ENCODE measurements at regions of chr2 and their contacts with region 1.

Region 1: DNA sequence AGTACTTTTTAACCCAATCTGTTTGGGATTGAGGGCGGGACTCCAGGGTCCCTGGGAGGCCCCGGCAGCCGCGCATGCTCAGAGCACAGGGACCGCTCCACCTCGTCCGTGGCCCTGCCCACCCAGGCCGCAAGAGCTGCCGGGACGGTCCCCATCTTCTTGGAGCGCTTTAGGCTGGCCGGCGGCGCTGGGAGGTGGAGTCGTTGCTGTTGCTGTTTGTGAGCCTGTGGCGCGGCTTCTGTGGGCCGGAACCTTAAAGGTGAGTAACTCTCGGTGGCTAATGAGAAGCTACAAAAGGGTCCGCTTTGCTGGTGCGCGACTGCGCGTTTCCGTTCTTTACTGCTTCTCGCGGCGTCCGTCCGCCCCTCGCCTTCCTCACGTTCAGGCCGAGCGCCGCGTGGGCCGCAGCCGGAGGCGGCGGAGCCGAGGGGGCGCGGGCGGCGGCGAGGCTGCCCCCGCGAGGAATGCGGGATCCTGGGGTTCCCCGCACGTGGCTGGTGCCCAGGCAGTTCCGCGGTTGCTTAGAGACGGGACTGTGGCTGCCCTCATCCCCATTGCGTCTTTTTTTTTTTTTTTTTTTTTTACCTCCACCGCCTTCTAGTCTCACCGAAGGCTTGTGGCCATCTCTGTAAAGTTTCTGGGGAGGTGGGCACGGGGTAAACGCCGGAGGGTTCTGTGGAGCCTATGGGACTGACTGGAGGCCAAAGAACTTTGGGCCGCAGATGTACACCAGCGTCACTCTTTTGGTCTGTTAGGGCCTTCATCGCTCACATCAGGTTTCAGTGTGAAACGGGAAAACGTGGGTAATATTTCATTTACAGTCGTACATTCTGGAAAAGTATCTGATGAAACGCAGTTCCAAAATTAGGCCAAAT is at the start of gene SSB:
- DNase-seq: peak; percentile 97
- H3K4me3 Mint-ChIP-seq: peak within 1 kb of the TSS; percentile 88
- H3K27ac Mint-ChIP-seq: peak within 1 kb of the TSS; percentile 95
- H3K4me1 Mint-ChIP-seq: peaks cover 29% of the 10 kb centered on the region
- H3K27me3 Mint-ChIP-seq: peaks cover 2% of the 10 kb centered on the region
- total RNA-seq, gene SSB: 122 to 129 TPM

Region 2: DNA sequence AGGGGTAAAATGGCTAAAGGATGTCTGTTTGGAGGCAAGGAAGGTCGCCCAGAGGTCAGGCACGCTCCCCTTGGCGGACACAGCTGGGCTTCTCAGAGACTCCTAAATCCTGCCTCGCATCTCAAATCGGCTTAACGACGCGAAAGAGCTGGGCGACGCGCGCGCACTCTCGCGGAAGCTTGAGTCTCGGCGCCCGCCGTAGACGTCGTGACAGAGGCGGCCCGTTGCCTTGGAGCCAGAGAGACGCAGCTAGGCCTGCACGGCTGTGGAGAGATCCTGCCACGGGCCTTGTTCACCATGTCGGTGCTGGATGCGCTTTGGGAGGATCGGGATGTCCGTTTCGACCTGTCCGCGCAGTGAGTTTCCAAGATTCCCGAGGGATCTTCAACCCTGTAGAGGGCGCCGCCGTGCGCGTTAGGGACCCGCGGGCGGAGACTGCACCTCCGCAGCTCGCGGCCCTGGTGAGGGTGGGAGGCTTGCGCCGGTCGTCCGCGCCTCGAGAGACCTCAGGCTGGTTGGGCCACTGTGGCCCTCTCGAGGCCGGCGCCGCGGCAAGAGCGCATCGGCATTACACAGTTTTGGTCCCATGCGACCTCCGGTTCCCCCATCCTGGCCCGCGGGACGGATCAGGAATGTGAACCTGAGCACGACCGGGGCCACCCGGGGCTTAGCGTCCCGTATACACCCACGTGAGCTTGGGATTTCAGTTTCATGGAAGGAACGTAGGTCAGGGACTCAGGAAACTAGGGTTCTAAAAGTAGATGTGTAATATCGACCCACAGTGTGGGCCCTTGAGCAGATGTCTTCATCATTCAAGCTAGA is 319.5 kb before region 1 on chr2 and contains the start of gene BBS5:
- CTCF ChIA-PET with region 1: no interaction called
- intact Hi-C with region 1: loop called (anchors 2 kb)
- DNase-seq: peak; percentile 87
- H3K4me3 Mint-ChIP-seq: peak within 1 kb of the TSS; percentile 91
- H3K27ac Mint-ChIP-seq: no peak within 1 kb of the TSS
- H3K4me1 Mint-ChIP-seq: peaks cover 10% of the 10 kb centered on the region
- H3K27me3 Mint-ChIP-seq: no peaks in the 10 kb centered on the region
- total RNA-seq, gene BBS5: 2.1 to 2.2 TPM

Region 3: DNA sequence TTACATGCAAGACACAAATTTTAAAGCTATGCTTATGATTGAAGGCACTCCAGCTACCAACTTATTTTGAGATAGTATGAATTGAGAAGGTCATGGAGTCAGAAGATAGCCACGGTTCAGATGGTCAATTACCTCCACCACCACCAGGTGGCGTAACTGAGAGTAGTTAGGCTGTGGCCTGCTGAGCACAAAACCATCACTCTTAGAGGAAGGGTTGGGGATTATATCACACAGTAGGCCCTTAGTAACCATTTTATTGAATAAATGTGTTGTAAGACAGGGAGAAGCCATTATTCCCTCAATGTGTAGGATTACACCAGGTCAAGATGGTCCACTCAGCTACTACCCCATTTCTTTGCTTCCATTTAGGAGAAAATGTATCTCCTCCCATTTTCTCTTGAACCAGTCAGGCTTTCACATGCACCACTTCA is 270.7 kb before region 1 on chr2:
- CTCF ChIA-PET with region 1: no interaction called
- intact Hi-C with region 1: loop called (anchors 10 kb)
- DNase-seq: peak; percentile 86
- H3K4me3 Mint-ChIP-seq: no peak overlapping the region
- H3K27ac Mint-ChIP-seq: no peak overlapping the region
- H3K4me1 Mint-ChIP-seq: no peaks in the 10 kb centered on the region
- H3K27me3 Mint-ChIP-seq: no peaks in the 10 kb centered on the region

Region 4: DNA sequence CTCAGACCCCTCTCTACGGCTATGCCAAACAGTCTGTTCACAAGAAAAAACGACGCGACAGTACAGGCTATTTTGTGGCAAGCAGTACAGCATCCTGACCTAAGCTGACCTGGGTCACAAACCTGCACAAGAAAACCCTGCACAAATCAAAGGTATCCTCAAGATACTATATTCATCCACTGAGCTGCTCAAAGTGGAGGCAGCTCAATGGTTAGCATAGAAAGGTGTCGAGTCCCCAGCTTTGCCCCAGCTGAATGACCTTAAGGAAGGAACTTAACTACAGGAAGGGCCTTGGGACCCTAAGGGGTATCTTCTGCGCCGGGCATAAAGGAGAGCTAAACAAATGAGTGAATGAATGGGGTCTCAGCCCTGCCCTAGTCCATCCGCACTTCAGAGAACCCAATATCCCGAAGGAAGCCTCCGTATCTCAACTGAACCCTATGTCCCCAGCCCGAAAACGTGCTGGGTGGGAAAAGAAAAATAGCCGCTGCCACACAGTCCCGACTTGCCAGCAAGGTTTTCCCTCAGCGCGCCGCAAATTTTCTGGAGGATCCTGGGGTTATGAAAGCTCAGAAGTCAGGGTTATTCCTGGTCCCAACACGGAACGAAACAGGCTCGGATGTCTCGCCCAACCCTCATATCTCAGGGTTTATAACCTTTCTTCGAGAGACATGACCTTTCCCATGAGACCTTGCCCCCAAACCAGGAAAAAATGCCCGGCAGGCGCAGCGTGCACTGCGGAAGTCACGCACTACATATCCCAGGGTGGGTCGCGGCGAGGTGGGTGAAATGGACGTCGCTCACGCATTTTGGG is 225.6 kb before region 1 on chr2 and contains the start of gene FASTKD1:
- CTCF ChIA-PET with region 1: no interaction called
- intact Hi-C with region 1: loop called (anchors 1 kb)
- DNase-seq: peak; percentile 94
- H3K4me3 Mint-ChIP-seq: peak within 1 kb of the TSS; percentile 98
- H3K27ac Mint-ChIP-seq: peak within 1 kb of the TSS; percentile 89
- H3K4me1 Mint-ChIP-seq: peaks cover 23% of the 10 kb centered on the region
- H3K27me3 Mint-ChIP-seq: no peaks in the 10 kb centered on the region
- total RNA-seq, gene FASTKD1: 41.3 to 42.7 TPM

Region 5: DNA sequence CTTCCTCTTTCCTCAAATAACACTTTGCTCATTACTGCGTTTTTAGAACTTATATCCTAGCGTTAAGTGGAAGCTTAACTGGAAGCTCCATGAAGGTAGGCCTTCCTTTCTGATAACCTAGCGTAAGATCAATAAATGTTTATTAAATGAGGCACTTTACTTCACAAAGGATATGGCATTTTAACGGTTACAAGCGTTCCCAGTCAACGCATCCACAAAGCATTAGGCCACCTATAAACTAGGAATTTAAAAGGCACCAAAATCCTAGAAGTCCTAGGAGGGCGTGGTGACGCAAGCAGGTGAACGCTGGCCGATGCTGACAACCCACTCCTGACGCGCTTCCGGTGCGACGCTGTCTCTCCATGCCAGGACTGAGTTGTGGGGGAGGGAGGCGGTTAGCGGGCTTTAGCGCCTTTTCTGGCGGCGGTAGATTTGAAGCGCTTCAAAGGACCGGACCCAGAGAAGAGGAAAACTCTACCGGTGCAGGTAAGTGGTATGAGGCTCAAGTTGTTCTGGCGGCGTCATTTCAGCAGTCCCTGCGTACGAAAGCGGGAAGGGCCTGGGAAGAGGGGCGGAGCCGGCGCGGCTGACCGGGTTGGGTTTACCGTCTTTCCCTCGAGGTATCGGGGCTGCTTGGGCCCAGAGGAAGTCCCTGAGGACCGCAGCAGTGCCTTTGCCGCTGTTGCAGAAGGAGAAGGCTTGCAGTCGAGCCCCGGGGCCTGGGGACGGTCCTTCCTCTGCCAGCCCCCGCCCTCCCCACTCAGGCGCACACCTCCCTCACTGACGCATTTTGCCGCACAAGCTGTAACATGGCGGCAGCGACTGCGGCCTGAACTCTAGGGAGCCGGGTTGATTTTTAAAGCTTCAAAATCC is 214.7 kb before region 1 on chr2 and contains the start of gene PPIG:
- CTCF ChIA-PET with region 1: interaction called, 3 read pairs
- intact Hi-C with region 1: loop called (anchors 1 kb)
- DNase-seq: peak; percentile 94
- H3K4me3 Mint-ChIP-seq: peak within 1 kb of the TSS; percentile 98
- H3K27ac Mint-ChIP-seq: peak within 1 kb of the TSS; percentile 100
- H3K4me1 Mint-ChIP-seq: peaks cover 33% of the 10 kb centered on the region
- H3K27me3 Mint-ChIP-seq: no peaks in the 10 kb centered on the region
- total RNA-seq, gene PPIG: 53.4 to 56.6 TPM

Region 6: DNA sequence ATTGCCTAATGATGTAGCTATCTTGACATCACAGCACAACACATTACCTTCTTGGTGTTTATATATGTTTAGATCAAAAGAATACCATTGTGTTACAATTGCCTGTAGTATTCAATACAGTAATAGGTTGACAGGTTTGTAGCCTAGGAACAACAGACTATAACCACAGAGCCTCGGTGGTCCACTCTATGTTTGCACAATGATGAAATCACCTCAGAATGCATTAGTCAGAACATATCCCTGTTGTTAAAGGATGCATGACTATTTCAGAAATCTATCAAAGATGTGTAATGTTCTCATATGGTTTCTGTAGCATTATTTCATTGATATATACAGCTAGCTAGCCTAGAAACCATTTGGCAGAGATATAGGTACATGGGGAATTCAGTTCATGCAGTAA is 16.9 kb after region 1 on chr2:
- CTCF ChIA-PET with region 1: interaction called, 5 read pairs
- intact Hi-C with region 1: loop called (anchors 1 kb)
- DNase-seq: no peak
- H3K4me3 Mint-ChIP-seq: no peak overlapping the region
- H3K27ac Mint-ChIP-seq: no peak overlapping the region
- H3K4me1 Mint-ChIP-seq: peaks cover 26% of the 10 kb centered on the region
- H3K27me3 Mint-ChIP-seq: no peaks in the 10 kb centered on the region